ENCODE measurements at regions of chrX and their contacts with region 1.

Region 1: GRCh38 chrX:153061732-153062131 is 5.5 kb downstream of the PNMA3 start:
- DNase-seq: no peak
- H3K4me3 ChIP-seq: no peak overlapping the region
- H3K27ac ChIP-seq: no peak overlapping the region
- H3K4me1 ChIP-seq: no peaks in the 10 kb centered on the region
- H3K27me3 ChIP-seq: no peaks in the 10 kb centered on the region
- CTCF ChIP-seq: no peak
- EP300 ChIP-seq: no peak
- POLR2A ChIP-seq: no peak

Region 2: GRCh38 chrX:152897222-152898131 is 164.3 kb before region 1 on chrX and contains the start of gene ZNF185:
- intact Hi-C with region 1: no loop called
- DNase-seq: peak in 3 of 5 donors; percentile 36 to 60 (median 41)
- H3K4me3 ChIP-seq: peak within 1 kb of the TSS; percentile 37
- H3K27ac ChIP-seq: no peak within 1 kb of the TSS
- H3K4me1 ChIP-seq: no peaks in the 10 kb centered on the region
- H3K27me3 ChIP-seq: no peaks in the 10 kb centered on the region
- CTCF ChIP-seq: no peak
- EP300 ChIP-seq: no peak
- POLR2A ChIP-seq: no peak
- total RNA-seq, gene ZNF185: 3.5 to 26.9 (median 10.0) TPM

Region 3: GRCh38 chrX:153319295-153320046 is 257.7 kb after region 1 on chrX:
- intact Hi-C with region 1: loop called in 1 of 4 experiments (anchors 5 kb)
- DNase-seq: no peak
- H3K4me3 ChIP-seq: no peak overlapping the region
- H3K27ac ChIP-seq: no peak overlapping the region
- H3K4me1 ChIP-seq: no peaks in the 10 kb centered on the region
- H3K27me3 ChIP-seq: no peaks in the 10 kb centered on the region
- CTCF ChIP-seq: no peak
- EP300 ChIP-seq: no peak
- POLR2A ChIP-seq: no peak